ENCODE measurements at regions of chr15 and their contacts with region 1.

Region 1: GRCh38 chr15:60179786-60180391 is 175.8 kb downstream of the FOXB1 start:
- DNase-seq: peak; percentile 32
- H3K4me3 ChIP-seq: no peak overlapping the region
- H3K27ac ChIP-seq: no peak overlapping the region
- H3K4me1 ChIP-seq: peaks cover 6% of the 10 kb centered on the region
- H3K27me3 ChIP-seq: no peaks in the 10 kb centered on the region
- CTCF ChIP-seq: peak; percentile 90 to 98

Region 2: DNA sequence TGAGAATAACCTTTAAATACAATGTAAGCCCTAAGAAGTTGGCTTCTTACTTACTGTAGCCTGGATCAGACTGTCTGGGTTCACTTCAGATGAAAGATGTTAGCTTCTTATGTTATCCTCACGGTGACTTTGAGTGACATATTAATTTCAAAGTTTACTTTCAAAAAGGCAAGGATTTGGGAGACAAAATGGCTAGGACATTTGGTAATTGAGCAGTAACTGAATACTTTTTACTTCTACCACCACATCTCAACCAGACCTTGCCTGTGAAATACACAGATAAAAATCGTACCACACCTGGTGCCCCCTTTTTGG is 454.8 kb before region 1 on chr15:
- CTCF ChIA-PET with region 1: no interaction called
- dilution Hi-C with region 1: no loop called
- in situ Hi-C with region 1: loop called in 1 of 2 experiments (anchors 25 kb)
- intact Hi-C with region 1: loop called (anchors 5 kb)
- DNase-seq: no peak
- H3K4me3 ChIP-seq: no peak overlapping the region
- H3K27ac ChIP-seq: no peak overlapping the region
- H3K4me1 ChIP-seq: peaks cover 6% of the 10 kb centered on the region
- H3K27me3 ChIP-seq: no peaks in the 10 kb centered on the region
- CTCF ChIP-seq: no peak

Region 3: DNA sequence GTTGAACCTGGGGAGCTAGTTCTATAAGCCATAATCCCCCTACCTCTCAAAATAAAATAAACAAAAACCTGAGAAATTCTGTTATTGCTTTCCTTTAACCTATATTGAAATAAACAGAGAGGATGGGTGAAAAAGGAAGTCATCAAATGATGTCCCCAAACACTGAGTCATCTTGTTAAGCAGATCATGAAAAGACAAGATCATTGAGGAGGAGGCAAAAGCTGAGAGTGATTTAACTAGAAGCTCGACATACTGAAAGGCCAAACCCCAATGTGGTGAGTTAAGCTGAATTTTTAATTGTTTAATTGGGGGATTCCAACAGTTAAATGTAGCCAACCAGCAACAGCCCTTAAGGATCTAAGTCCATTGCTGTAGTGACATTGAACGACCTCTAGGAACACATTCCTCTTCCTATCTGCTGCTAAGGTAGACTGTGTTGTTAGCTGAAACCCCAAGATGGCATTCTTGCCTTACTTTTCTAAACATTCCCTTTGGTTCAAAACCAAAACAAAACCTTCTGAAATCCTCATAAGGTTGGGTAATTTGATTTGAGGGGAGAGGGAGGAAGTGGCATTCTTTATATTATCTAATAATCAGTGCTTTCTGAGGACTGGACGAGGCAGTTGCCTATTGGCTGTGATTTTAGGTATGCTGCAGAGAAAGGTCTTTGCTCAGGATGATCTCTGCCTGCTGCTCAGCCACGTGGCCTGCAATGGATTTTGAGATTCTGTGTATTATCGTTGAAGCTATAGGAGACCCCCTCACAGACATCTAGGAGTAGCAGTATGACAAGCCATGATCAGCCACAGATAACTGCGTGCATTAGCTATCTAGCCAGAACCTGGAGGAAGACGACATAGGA is 428.1 kb before region 1 on chr15:
- CTCF ChIA-PET with region 1: no interaction called
- dilution Hi-C with region 1: no loop called
- in situ Hi-C with region 1: loop called (anchors 10 to 25 kb)
- intact Hi-C with region 1: loop called (anchors 1 kb)
- DNase-seq: peak; percentile 41
- H3K4me3 ChIP-seq: no peak overlapping the region
- H3K27ac ChIP-seq: no peak overlapping the region
- H3K4me1 ChIP-seq: no peaks in the 10 kb centered on the region
- H3K27me3 ChIP-seq: no peaks in the 10 kb centered on the region
- CTCF ChIP-seq: peak; percentile 48 to 62

Region 4: GRCh38 chr15:59950603-59951388 is 229.1 kb before region 1 on chr15:
- CTCF ChIA-PET with region 1: interaction called, 22 read pairs
- dilution Hi-C with region 1: no loop called
- in situ Hi-C with region 1: no loop called
- intact Hi-C with region 1: no loop called
- DNase-seq: no peak
- H3K4me3 ChIP-seq: no peak overlapping the region
- H3K27ac ChIP-seq: no peak overlapping the region
- H3K4me1 ChIP-seq: no peaks in the 10 kb centered on the region
- H3K27me3 ChIP-seq: no peaks in the 10 kb centered on the region
- CTCF ChIP-seq: no peak

Region 5: GRCh38 chr15:60128000-60128376 is 51.9 kb before region 1 on chr15:
- CTCF ChIA-PET with region 1: interaction called, 6 read pairs
- dilution Hi-C with region 1: no loop called
- in situ Hi-C with region 1: no loop called
- intact Hi-C with region 1: loop called (anchors 5 kb)
- DNase-seq: no peak
- H3K4me3 ChIP-seq: peak overlapping the region; percentile 43 to 58 (median 46)
- H3K27ac ChIP-seq: peak overlapping the region; percentile 57
- H3K4me1 ChIP-seq: peaks cover 4% of the 10 kb centered on the region
- H3K27me3 ChIP-seq: no peaks in the 10 kb centered on the region
- CTCF ChIP-seq: no peak

Measured in mammary epithelial cell (primary cell).